ENCODE measurements at regions of chr7 and their contacts with region 1.

Region 1: DNA sequence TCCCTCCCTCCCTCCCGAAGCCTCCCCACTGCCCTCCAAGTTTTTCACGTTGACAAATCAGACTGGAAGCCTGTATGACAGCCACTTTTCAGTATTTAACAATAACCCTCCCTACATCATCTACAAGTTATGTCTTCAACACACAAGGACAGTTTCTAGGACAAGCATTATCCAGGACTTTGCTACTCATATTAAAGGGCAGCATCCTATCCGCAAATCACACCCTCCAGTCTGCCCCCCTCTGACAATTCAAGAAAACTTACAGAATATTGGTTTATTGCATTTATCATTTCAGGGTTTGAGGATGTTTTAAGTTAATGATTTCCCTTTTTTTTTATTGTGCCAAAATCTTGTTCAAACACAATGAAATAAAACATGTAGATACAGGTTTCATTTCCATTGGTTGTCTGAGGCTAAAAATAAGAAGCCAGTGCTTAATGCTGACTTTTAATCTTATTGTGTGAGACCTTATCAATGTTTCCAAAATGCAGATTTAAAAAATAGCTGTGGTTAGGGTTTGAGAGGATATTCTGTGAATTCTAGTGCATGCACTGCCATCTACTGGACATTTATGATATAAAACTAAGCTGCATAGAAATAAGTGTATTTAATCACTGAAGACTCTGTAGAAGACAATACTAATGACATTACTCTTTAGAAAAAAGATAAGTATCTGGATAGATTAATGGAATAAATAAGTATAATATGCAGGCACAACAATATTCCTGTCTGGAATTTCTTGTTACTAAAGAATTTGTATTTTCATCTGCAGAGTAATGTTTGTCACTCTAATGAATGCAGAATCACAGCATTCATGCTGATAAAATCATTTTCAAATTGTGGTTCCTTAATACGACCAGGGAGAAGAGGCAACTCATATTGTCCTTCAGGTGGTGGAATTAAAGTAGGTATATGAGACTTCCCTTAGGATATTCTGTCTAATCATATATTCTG is 64.1 kb downstream of the CAV1 start:
- DNase-seq: peak; percentile 64
- H3K4me3 Mint-ChIP-seq: no peak overlapping the region
- H3K27ac Mint-ChIP-seq: peak overlapping the region; percentile 85
- H3K4me1 Mint-ChIP-seq: peaks cover 16% of the 10 kb centered on the region
- H3K27me3 Mint-ChIP-seq: peaks cover 10% of the 10 kb centered on the region
- CTCF ChIP-seq: peak; percentile 57

Region 2: DNA sequence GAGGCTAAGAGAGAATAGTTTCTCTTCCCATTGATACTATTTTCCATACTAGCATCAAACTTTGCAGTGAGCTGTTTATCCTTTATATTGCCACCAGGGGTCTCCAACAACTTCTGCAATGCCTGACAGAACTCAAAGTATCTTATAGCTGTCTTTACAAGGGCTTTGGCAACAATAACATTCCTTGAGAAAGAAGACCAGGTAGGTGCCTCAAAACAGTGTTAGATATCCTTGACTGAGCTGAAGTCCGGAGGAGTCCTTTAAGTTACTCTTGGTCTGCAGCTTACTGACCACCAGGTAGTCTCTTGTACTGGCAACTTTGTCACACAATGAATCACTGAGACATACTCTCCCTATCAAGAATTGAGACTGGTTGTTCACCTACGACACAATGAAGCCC is 408.6 kb before region 1 on chr7:
- CTCF ChIA-PET with region 1: interaction called, 35 read pairs
- POLR2A ChIA-PET with region 1: no interaction called
- intact Hi-C with region 1: no loop called
- DNase-seq: peak; percentile 73
- H3K4me3 Mint-ChIP-seq: no peak overlapping the region
- H3K27ac Mint-ChIP-seq: no peak overlapping the region
- H3K4me1 Mint-ChIP-seq: peaks cover 16% of the 10 kb centered on the region
- H3K27me3 Mint-ChIP-seq: no peaks in the 10 kb centered on the region
- CTCF ChIP-seq: peak; percentile 80

Region 3: DNA sequence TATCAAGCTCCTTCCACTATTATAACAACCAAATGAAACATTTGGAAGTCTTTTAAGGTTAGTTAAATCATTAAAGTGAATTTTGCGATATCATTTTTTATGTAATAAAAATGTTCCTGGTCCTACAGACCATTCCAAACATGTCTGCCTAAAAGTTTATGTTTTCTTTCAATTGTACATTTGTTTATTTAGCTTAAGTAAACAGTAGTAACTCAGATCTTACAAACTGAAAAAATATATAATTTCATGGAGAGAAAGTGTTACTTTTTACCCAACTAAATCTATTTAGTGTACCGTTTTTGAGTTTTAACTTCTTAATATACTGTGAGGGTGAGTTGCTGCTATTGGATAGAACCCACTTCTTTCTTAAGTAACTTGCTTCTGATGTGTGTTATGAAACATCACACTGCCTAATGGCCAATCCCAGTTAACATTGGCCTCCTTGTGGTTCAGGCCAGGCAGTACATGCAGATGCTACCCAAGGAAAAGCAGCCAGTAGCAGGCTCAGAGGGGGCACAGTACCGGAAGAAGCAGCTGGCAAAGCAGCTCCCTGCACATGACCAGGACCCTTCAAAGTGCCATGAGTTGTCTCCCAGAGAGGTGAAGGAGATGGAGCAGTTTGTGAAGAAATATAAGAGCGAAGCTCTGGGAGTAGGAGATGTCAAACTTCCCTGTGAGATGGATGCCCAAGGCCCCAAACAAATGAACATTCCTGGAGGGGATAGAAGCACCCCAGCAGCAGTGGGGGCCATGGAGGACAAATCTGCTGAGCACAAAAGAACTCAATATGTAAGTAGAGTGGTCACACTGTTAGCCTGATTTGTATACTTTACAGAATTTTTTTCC is 339.0 kb before region 1 on chr7:
- CTCF ChIA-PET with region 1: interaction called, 13 read pairs
- POLR2A ChIA-PET with region 1: interaction called, 32 read pairs
- intact Hi-C with region 1: no loop called
- DNase-seq: peak; percentile 52
- H3K4me3 Mint-ChIP-seq: no peak overlapping the region
- H3K27ac Mint-ChIP-seq: peak overlapping the region; percentile 22
- H3K4me1 Mint-ChIP-seq: peaks cover 24% of the 10 kb centered on the region
- H3K27me3 Mint-ChIP-seq: no peaks in the 10 kb centered on the region
- CTCF ChIP-seq: peak; percentile 33

Region 4: GRCh38 chr7:116499168-116500077 is 89.5 kb before region 1 on chr7 and contains the start of gene CAV2:
- CTCF ChIA-PET with region 1: interaction called, 8 read pairs
- POLR2A ChIA-PET with region 1: interaction called, 3 read pairs
- intact Hi-C with region 1: loop called (anchors 5 kb)
- DNase-seq: peak; percentile 86
- H3K4me3 Mint-ChIP-seq: peak within 1 kb of the TSS; percentile 87
- H3K27ac Mint-ChIP-seq: peak within 1 kb of the TSS; percentile 90
- H3K4me1 Mint-ChIP-seq: peaks cover 32% of the 10 kb centered on the region
- H3K27me3 Mint-ChIP-seq: no peaks in the 10 kb centered on the region
- CTCF ChIP-seq: no peak
- total RNA-seq, gene CAV2: 155 and 171 TPM in 2 replicates

Region 5: DNA sequence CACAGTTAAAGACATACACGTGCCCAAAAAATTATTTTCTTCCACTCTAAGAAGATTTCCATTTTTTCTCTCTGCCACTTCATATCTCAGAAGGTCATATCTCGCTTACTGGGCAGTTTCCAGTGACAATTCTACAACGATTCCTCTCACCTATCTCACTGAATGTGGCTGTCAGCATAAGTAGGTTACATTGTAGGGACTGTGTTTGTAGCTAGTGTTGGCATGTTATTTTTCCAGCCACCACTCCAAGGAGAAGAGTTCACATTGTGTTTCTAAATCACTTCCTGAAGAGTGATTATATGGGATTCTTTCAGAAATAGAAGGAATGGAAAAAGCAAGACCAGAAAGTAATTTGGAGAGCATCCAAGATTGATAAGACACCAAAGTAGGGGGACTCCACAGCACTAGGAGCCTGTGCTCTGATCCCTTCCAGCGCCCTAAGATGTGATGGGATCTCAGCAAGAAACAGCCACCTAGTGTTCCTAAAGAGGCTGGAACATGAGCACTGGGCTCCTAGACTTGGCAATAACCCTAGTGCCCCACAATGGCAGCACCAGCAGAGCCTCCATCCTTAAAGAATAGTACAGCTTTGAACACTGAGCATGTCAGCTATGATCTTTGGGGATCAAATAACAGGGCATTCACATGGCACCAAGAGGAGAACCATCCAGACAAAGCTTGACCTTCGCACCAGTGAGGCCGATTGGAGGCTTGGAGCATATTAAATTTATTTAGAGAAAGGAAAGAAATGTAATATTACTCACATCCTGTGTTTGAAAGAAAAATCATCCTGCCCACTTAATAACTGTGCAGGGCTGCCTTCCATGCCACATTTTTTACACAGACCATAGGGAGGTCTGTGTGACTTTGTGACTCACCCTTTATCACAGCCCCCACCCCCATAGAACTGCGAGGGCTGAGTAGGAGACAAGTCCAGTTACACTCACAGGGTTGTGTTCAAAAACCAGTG is 12.3 kb before region 1 on chr7:
- CTCF ChIA-PET with region 1: interaction called, 33 read pairs
- POLR2A ChIA-PET with region 1: interaction called, 5 read pairs
- intact Hi-C with region 1: no loop called
- DNase-seq: peak; percentile 70
- H3K4me3 Mint-ChIP-seq: no peak overlapping the region
- H3K27ac Mint-ChIP-seq: peak overlapping the region; percentile 51
- H3K4me1 Mint-ChIP-seq: peaks cover 34% of the 10 kb centered on the region
- H3K27me3 Mint-ChIP-seq: no peaks in the 10 kb centered on the region
- CTCF ChIP-seq: no peak

Region 6: DNA sequence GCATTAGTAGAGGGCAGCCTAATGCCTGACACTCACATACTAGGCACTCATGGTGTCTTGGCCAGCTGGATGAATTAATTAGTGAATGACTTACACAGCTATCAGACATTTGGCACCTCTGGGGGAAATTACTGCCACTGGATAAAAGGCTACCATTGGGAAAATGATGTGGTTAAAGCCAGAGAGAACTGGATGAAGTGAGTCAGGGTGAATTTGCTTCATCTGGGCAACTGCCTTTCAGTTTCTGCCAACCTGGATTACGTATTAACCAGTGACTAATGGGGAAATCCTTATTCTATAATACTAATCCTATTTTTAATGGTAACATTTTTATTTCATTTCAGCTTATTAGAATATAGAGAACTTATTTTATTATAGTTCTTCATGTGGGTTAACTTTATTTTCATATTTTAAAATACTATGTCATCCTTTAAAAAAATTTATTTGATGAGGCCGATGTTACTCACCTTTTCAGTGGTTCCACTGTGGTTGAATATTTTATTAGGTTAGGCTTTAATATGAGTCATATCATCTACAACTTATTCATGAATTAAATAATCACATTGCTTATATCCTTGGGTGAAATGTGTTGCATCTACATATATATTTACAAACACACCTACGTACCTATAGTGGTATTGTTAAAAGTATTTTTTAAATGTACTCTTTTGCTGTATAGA is 187.8 kb after region 1 on chr7:
- CTCF ChIA-PET with region 1: interaction called, 20 read pairs
- POLR2A ChIA-PET with region 1: interaction called, 3 read pairs
- intact Hi-C with region 1: no loop called
- DNase-seq: peak; percentile 94
- H3K4me3 Mint-ChIP-seq: no peak overlapping the region
- H3K27ac Mint-ChIP-seq: peak overlapping the region; percentile 57
- H3K4me1 Mint-ChIP-seq: peaks cover 16% of the 10 kb centered on the region
- H3K27me3 Mint-ChIP-seq: no peaks in the 10 kb centered on the region
- CTCF ChIP-seq: no peak